Natural killer cell (primary cell): ENCODE measurements at regions of chr5 and their contacts with region 1.

Region 1: DNA sequence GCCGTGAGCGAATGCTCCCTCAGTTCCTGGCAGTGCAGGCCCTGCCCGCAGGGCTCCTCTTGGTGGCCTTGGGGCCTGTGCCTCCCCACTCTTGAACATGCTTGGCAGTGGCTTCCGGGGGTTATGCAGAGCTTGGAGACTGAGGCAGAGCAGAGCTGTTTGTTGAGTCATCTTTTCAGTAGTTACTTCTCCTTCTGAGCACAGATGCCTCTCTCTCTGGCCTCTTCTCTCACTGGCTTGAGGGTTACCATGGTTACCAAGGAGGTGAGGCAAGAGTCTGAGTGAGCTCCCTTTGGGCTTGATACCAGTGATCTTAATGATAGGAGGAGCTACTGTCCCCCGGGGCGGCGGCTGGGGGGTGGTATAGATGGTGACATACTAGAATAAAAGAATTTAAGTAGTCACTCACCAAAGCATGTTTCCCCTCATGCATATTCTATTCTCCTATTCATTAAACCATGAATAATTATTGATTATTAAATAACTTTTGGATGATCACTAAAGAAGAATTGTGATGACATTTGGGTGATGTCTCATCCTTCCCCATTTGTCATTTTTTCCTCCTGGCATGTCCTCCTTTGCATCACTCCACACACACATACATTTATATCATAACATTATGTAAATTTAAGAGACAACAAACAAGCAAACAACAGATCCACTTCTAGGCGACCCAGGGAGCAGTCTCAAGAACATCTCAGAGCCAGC is 111.1 kb downstream of the ARHGAP26 start:
- DNase-seq: peak in 1 of 2 donors; percentile 13
- ATAC-seq: peak; percentile 21 to 65 (median 24)
- H3K4me3 ChIP-seq: no peak overlapping the region
- H3K4me3 Mint-ChIP-seq: no peak overlapping the region
- H3K27ac ChIP-seq: no peak overlapping the region
- H3K27ac Mint-ChIP-seq: peak overlapping the region; percentile 18 to 33
- H3K4me1 ChIP-seq: peaks cover 5% of the 10 kb centered on the region
- H3K4me1 Mint-ChIP-seq: peaks cover 22 to 23% of the 10 kb centered on the region in 2 donors
- H3K27me3 ChIP-seq: no peaks in the 10 kb centered on the region
- H3K27me3 Mint-ChIP-seq: no peaks in the 10 kb centered on the region
- CTCF ChIP-seq: no peak

Region 2: DNA sequence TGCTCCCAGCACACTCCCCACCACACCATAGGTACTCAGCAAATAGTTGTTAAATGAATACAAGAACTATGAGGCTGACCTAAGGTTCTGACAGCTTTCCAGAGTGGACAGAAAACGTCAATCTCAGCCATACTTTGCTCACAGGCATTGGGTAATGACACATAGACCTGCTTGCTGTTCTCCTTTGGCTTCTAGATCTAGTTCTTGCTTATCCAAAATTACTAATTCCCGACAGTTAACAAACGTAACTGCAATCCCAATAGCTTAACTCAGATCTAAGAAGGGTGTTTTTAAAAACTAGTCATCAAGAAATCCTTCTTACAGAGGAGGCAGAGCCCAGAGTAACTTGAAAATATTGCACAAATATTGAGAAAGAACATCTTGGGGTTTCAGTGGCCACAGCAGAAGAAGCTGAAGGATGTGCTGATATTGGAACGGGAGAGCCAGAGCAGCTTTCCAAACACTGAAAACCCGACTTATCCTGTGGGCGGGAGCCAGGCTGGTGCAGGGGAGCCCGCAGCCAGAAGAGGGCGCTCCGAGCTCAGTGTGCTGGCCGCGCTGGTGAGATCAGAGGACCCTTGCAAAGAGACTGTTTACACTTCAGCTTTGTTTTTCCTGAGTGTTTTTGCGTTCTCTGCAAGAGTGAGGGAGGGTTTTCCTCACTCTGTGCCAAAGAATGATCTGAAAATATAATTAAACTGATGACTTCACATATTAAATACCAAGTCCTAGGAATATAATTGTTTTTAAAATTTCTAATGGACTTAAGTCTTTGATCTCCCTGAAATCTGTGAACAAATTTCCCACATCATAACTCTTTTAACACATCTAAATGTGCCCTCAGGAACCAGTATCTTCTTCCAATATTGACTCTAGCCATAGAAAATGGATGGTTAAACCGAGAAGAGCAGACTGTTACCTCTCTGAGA is 225.6 kb before region 1 on chr5:
- intact Hi-C with region 1: loop called (anchors 2 kb)
- DNase-seq: peak; percentile 61 to 79
- ATAC-seq: peak; percentile 78 to 97 (median 92)
- H3K4me3 ChIP-seq: no peak overlapping the region
- H3K4me3 Mint-ChIP-seq: no peak overlapping the region
- H3K27ac ChIP-seq: no peak overlapping the region
- H3K27ac Mint-ChIP-seq: no peak overlapping the region
- H3K4me1 ChIP-seq: no peaks in the 10 kb centered on the region
- H3K4me1 Mint-ChIP-seq: no peaks in the 10 kb centered on the region
- H3K27me3 ChIP-seq: peaks cover 2% of the 10 kb centered on the region
- H3K27me3 Mint-ChIP-seq: peaks cover 12 to 17% of the 10 kb centered on the region in 2 donors
- CTCF ChIP-seq: peak; percentile 87

Region 3: DNA sequence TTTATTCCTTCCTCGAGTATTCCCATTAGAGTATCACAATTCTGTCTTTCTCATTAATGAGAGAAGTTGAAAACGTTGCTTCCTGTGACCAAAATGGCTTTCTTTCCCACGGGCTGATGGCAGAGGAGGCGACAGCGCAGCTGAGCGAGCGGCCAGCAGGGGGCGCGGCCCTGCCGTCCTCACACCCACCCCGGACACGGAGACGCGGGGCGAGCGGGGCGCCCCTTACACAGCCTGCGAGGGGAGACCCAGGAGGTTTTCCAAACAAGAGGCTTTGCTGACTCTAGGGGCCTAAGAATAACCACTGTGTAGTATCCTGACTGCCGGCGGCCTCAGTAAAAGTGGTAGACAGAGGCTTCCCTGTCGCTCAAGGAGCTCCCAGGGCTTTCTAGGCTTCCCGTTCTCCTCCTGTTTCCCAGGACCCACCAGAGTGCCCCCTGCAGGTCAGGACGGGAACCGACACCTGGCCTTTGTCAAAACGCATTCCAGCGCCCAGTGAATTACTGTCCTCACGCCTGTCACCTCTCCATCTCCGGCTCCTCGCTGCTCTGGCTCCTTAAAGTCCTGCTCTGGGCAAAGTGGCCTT is 168.0 kb before region 1 on chr5:
- intact Hi-C with region 1: loop called (anchors 1 kb)
- DNase-seq: peak; percentile 83 to 93
- ATAC-seq: peak; percentile 92 to 93 (median 93)
- H3K4me3 ChIP-seq: peak overlapping the region; percentile 26
- H3K4me3 Mint-ChIP-seq: peak overlapping the region; percentile 75
- H3K27ac ChIP-seq: no peak overlapping the region
- H3K27ac Mint-ChIP-seq: peak overlapping the region; percentile 64 to 81
- H3K4me1 ChIP-seq: peaks cover 36% of the 10 kb centered on the region
- H3K4me1 Mint-ChIP-seq: peaks cover 43 to 44% of the 10 kb centered on the region in 2 donors
- H3K27me3 ChIP-seq: no peaks in the 10 kb centered on the region
- H3K27me3 Mint-ChIP-seq: peaks cover 0 to 7% of the 10 kb centered on the region in 2 donors
- CTCF ChIP-seq: peak; percentile 99

Region 4: DNA sequence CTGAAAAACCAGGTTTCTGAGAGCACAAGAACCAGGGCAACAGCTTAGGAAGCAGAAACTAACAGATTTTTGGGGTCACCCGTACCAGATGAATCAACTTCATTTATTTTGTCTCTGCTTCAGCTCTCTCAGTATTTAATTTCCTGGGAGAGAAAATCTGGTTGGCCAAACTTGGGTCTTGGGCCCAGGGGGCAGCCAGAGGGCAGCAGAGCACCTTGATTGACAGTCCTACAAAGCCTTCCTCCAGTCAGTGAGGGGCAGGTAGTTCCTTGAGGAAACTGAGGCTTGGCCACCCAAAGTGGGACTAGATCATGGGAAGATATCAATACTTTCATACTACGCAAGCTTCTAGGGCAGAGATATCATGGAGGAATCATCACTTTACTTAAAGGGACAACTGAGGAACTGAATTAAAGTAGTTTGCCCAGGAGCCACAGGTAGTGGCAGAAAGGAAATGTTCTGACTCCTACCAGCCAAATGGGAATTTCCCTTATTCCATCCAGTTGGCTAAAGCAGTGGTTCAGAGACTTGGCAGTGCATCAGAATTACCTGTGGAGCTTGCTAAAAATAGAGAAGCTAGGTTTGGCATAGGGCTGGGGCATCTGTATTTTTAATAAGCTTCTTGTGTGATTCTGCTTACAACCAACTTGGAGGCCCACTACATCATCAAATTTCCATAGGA is 132.5 kb before region 1 on chr5:
- intact Hi-C with region 1: loop called (anchors 1 kb)
- DNase-seq: peak; percentile 42 to 79
- ATAC-seq: peak; percentile 64 to 82 (median 66)
- H3K4me3 ChIP-seq: no peak overlapping the region
- H3K4me3 Mint-ChIP-seq: no peak overlapping the region
- H3K27ac ChIP-seq: no peak overlapping the region
- H3K27ac Mint-ChIP-seq: no peak overlapping the region
- H3K4me1 ChIP-seq: peaks cover 3% of the 10 kb centered on the region
- H3K4me1 Mint-ChIP-seq: peaks cover 14 to 23% of the 10 kb centered on the region in 2 donors
- H3K27me3 ChIP-seq: no peaks in the 10 kb centered on the region
- H3K27me3 Mint-ChIP-seq: no peaks in the 10 kb centered on the region
- CTCF ChIP-seq: peak; percentile 74

Region 5: DNA sequence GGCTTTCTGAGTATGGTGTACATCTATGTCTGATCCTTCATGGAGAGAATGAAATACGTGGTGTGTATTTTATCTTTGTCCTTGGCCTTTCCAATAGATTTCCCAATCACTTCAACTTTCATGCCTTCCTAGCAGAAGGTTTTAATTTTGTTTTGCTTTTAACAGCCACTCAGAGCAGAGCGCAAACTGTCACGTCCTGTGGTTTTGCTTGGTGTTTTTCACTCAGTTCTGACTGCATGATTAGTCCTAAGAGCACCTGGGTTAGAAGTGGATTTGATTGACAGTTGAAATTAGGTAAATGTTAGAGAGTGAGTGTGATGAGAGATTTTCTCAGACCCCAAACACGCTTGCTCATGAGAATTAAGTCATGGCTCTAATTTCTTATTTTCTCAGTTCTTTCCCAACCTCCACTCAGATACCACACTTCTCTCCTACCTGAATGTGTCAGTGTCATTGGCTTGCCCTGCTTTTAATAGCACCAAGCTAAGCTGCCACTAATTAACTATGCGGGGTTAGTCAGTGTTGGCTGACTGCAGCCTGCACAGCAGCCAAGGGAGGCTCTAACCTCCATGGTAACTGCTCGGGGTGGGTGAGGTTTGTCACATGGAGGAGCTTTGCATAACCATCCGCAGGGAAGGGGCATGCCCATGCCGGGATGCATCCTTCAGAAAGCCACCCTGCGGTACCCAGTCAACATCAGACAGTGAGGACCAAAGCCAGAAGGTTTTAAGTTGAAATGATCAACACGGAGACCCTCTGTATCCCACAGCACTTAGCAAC is 348.9 kb after region 1 on chr5:
- intact Hi-C with region 1: no loop called
- DNase-seq: peak in 1 of 2 donors; percentile 75
- ATAC-seq: peak; percentile 76 to 83 (median 79)
- H3K4me3 ChIP-seq: no peak overlapping the region
- H3K4me3 Mint-ChIP-seq: peak overlapping the region; percentile 60
- H3K27ac ChIP-seq: peak overlapping the region; percentile 24
- H3K27ac Mint-ChIP-seq: peak overlapping the region; percentile 25 to 89
- H3K4me1 ChIP-seq: peaks cover 19% of the 10 kb centered on the region
- H3K4me1 Mint-ChIP-seq: peaks cover 32 to 37% of the 10 kb centered on the region in 2 donors
- H3K27me3 ChIP-seq: no peaks in the 10 kb centered on the region
- H3K27me3 Mint-ChIP-seq: no peaks in the 10 kb centered on the region
- CTCF ChIP-seq: no peak